Activated T-helper 2 cell treated with anti-CD3 and anti-CD28 coated beads, Interferon-gamma antibody, Interleukin-2, Interleukin-4, amounts not matched to agents 10 μg/mL and 5 μg/mL and 100 μg/mL, durations not matched to agents 14 hours and 24 hours and 36 hours (primary cell): ENCODE measurements at regions of chr2 and their contacts with region 1.

Region 1: GRCh38 chr2:75403991-75404428 is 156.7 kb downstream of the EVA1A start:
- DNase-seq: no peak
- H3K4me3 Mint-ChIP-seq: no peak overlapping the region
- H3K27ac Mint-ChIP-seq: no peak overlapping the region
- H3K4me1 Mint-ChIP-seq: no peaks in the 10 kb centered on the region
- H3K27me3 Mint-ChIP-seq: peaks cover 6% of the 10 kb centered on the region

Region 2: DNA sequence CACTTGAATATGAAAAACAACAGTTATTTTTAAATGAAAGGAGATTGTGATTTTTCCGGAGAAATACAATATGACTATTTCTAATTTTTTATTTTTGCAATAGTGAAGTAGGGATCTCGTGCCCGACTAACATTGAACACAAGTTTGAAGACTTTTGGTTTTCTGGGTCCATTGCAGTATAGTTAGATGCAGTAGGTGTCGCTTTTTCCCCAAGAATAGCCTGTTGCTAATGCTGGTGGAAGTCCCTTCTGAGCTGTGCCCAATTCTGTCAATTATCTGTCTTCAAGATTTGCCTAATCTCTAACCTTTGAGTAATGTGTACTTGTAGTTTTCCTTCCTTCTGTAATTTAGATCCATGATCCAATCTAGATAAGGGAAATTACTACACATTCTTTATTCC is 713.4 kb before region 1 on chr2:
- intact Hi-C with region 1: loop called (anchors 5 kb)
- DNase-seq: no peak
- H3K4me3 Mint-ChIP-seq: no peak overlapping the region
- H3K27ac Mint-ChIP-seq: no peak overlapping the region
- H3K4me1 Mint-ChIP-seq: no peaks in the 10 kb centered on the region
- H3K27me3 Mint-ChIP-seq: peaks cover 22% of the 10 kb centered on the region

Region 3: DNA sequence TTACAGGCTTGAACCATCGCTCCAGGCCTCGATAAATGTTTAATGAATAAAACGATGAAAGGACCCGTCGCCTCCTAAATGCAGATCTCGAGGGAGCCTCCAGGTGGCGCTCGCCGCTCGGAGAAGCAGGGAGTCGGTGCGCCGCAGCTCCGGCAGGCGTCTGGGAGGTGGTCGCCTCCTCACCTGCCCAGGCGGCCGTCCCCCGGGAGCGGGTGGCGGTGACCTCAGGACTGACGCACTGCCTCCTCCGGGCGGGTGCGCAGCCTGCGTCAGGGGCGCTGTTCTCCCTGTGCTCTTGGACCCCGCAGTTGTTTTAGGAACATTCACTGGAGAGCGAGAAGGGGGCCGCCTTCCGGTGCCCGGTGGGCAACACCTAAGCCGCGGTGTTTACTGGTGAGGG is 484.2 kb before region 1 on chr2:
- intact Hi-C with region 1: loop called (anchors 1 kb)
- DNase-seq: peak; percentile 51
- H3K4me3 Mint-ChIP-seq: no peak overlapping the region
- H3K27ac Mint-ChIP-seq: no peak overlapping the region
- H3K4me1 Mint-ChIP-seq: peaks cover 9% of the 10 kb centered on the region
- H3K27me3 Mint-ChIP-seq: peaks cover 22% of the 10 kb centered on the region

Region 4: DNA sequence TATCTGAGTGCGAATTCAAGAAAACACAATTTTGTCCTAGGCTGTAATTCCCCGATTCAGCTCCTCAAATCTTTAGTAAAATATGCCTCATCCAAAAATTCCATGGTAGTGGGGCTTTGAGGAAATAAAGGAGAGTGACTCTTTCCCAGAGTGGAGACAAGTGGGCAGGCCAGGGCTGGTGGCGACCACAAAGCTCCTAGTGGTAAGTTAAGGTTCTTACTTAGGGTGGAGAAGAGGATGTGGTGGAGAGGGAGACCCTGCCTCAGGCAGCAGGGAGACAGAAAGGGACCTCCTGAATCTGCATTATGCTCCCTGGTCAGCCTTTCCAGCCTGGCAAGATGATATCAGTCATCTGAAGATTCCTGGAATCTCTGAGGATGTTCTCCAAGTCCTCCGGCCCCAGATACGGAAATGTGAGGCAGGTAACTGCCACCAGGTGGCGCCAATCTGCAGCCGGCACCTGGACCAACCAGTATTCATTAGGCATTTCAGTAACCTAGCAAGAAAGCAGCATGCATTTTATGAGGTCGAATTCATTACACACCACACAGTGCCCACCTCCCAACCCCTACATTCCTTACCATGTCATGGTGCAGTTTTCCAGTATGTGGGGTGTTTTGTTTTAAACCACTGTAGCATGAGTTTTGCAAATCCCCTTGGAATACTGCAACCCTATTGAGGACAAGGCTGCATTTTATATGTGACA is 339.2 kb before region 1 on chr2:
- intact Hi-C with region 1: loop called (anchors 10 kb)
- DNase-seq: peak; percentile 29
- H3K4me3 Mint-ChIP-seq: no peak overlapping the region
- H3K27ac Mint-ChIP-seq: no peak overlapping the region
- H3K4me1 Mint-ChIP-seq: peaks cover 2% of the 10 kb centered on the region
- H3K27me3 Mint-ChIP-seq: peaks cover 8% of the 10 kb centered on the region

Region 5: DNA sequence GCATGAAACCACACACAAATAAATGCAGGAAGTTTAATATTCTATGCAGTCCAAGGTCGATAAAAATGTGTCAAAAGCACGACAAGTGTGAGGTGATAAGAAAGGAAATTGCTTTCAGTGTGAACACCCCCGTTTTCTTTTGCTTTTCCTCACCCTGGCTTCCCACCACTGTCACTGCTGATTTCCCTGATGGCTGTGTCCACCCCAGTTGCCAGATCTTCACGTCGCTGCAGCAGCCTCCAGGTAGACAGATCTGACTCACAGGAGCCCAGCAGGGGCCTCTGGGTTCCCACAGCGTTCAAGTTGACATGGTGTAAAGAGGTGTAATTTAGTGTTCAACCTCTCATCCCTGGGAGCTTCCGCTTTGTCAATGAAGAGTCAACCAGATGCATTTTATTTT is 76.7 kb before region 1 on chr2:
- intact Hi-C with region 1: no loop called
- DNase-seq: no peak
- H3K4me3 Mint-ChIP-seq: no peak overlapping the region
- H3K27ac Mint-ChIP-seq: no peak overlapping the region
- H3K4me1 Mint-ChIP-seq: no peaks in the 10 kb centered on the region
- H3K27me3 Mint-ChIP-seq: no peaks in the 10 kb centered on the region

Region 6: DNA sequence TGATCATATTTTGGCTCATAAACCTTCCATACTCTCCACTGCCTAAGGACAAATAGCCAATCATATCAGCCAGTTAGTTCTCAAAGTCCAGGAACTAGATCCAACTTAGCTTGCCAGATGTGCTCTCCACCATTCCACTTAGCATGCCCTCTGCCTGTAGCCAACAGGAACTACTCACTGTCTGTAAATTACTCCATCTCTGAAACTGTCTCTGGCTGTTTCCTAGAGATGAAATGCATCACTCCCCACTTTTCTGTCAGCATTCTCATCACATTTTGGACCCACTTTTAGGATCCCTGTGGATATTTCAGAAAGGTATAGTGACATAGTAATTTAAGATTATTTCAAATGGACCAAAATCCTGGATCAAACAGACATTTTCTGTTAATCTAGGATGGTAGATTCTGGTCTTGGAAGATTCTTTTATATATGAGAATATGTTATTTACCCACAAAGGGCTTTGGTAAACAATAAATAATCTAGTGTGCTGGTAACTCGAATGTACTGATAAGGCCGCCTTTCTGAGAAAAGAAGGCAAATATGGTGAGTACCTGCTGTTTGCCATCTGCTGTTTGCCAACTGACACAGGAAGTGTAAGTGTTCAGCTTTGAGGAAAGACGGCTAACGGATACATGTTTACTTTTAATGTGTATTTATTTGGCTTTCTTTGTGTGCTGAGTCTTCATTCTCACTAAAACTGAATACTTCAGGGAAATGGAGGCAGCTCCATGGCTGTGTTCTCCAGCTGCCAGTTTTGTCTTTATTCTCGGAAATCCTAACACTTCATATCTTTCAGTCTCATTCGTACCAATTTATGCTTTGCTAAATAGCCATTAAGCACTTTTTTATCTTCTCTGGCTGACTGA is 77.2 kb after region 1 on chr2:
- intact Hi-C with region 1: no loop called
- DNase-seq: no peak
- H3K4me3 Mint-ChIP-seq: no peak overlapping the region
- H3K27ac Mint-ChIP-seq: no peak overlapping the region
- H3K4me1 Mint-ChIP-seq: peaks cover 10% of the 10 kb centered on the region
- H3K27me3 Mint-ChIP-seq: peaks cover 14% of the 10 kb centered on the region